ENCODE measurements at regions of chr5 and their contacts with region 1.

Region 1: GRCh38 chr5:131281133-131281867 is 17.4 kb downstream of the CDC42SE2 start:
- DNase-seq: peak in 1 of 2 experiments; percentile 70
- H3K4me3 ChIP-seq: peak overlapping the region; percentile 41; the same call in 1 of the 2 replicates
- H3K27ac ChIP-seq: peak overlapping the region; percentile 87
- H3K4me1 ChIP-seq: peaks cover 45% of the 10 kb centered on the region
- H3K27me3 ChIP-seq: no peaks in the 10 kb centered on the region
- CTCF ChIP-seq: no peak

Region 2: GRCh38 chr5:131270809-131271208 is 10.5 kb before region 1 on chr5:
- CTCF ChIA-PET with region 1: interaction called, 27 read pairs
- POLR2A ChIA-PET with region 1: interaction called, 4 read pairs
- intact Hi-C with region 1: no loop called
- DNase-seq: peak; percentile 30 to 73
- H3K4me3 ChIP-seq: peak overlapping the region; percentile 1; the same call in 1 of the 2 replicates
- H3K27ac ChIP-seq: peak overlapping the region; percentile 37
- H3K4me1 ChIP-seq: peaks cover 21% of the 10 kb centered on the region
- H3K27me3 ChIP-seq: no peaks in the 10 kb centered on the region
- CTCF ChIP-seq: no peak

Region 3: DNA sequence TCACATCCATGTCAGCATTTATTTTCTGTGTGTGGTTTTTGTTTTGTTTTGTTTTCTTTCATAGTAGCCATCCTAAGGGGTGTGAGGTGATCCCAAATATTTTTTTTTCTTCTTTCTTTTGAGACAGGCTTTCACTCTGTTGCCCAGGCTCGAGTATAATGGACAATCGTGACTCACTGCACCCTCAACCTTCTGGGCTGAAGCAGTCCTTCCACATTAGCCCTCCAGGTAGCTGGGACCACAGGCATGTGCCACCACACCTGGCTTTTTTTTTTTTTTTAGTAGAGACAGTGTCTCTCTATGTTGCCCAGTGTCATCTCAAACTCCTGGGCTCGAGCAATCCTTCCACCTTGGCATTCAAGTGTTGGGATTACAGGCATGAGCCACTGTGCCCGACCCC is 41.6 kb after region 1 on chr5:
- CTCF ChIA-PET with region 1: no interaction called
- POLR2A ChIA-PET with region 1: no interaction called
- intact Hi-C with region 1: loop called (anchors 2 kb)
- DNase-seq: peak; percentile 46 to 63
- H3K4me3 ChIP-seq: no peak overlapping the region
- H3K27ac ChIP-seq: no peak overlapping the region; the same call in 1 of the 2 replicates
- H3K4me1 ChIP-seq: peaks cover 3% of the 10 kb centered on the region
- H3K27me3 ChIP-seq: no peaks in the 10 kb centered on the region
- CTCF ChIP-seq: no peak